Sciatic nerve (tissue), 2 donors: ENCODE measurements at regions of chr4 and their contacts with region 1.

Region 1: DNA sequence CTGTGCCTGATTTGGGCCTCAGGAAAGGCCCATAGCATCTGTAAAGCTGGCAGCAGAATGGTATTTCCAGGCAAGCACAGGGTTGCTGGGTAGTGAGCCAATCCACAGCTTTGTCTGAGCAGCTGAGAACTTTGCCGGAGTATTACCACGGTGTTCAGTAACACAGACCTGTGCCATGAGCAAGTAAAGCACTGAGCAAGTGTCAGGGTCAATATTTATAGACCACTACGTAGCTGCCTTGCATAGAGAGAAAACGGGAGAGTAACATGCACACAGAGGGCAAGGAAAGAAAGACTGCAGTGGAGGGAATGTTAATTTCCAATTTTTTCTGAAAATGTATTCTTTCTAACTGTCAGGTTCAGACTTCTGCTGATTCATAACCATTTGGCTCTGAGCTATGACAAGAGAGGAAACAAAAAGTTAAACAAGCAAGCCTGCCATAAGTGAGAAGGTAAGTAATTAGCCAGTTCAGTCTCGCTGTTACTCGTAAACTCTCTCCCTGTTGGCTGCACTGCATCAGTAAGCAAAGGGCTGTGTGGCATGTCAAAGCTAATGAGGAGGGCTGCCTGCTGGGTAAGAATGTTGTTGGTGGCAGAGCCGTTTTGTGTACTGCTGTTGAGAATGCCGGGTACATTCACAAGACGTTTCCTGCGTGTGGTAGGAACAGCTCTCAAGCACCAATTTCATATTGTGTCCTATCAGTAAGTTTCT is 238.1 kb downstream of the BMPR1B start:
- DNase-seq: no peak
- ATAC-seq: peak; percentile 76

Region 2: GRCh38 chr4:94419956-94420355 is 575.9 kb before region 1 on chr4:
- intact Hi-C with region 1: loop called (anchors 5 kb)
- DNase-seq: no peak
- ATAC-seq: no peak

Region 3: DNA sequence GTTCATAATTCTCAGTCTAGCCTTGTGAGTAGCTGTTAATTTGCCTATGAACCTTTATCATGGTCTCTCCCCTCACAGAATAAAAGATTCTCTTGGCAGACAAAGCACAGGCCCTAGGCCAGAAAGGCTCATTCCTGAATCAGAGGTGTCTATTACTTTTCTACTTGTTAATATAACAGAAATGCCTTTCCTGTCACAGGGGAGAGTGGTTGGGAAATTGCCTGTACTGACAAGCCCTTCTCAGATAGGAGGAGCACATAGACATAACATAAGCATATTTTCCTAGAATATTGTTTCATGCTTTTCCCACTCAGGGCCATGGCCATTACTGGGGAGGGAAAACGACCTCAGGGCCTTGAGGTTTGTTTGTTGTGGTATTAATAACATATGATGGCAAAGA is 70.2 kb after region 1 on chr4:
- intact Hi-C with region 1: no loop called
- DNase-seq: no peak
- ATAC-seq: peak; percentile 49